Heart right ventricle (tissue), 16 donors: ENCODE measurements at regions of chr6 and their contacts with region 1.

Region 1: DNA sequence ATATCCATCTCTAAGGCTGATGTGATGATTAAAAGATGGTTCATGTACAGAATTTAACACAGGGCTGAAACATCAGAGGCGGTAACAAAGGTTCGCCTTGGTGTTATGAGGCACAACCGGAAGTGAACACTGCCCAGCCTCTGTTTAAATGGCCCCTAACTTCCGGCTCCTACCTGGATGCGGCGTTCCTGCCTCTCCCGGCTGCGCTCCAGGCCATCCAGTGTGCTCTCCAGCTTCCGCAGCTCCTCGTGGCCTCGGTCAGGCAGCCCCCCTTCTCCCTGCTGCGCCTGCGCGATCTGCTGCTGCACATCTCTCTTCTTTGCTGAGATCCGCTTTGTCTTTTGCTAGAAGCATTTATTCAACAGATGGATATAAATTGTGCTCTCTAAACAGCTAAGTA is 195.3 kb downstream of the SYNE1 start:
- DNase-seq: no peak
- ATAC-seq: no peak
- H3K4me3 ChIP-seq: no peak overlapping the region
- H3K27ac ChIP-seq: no peak overlapping the region
- H3K4me1 ChIP-seq: no peaks in the 10 kb centered on the region
- H3K27me3 ChIP-seq: no peaks in the 10 kb centered on the region
- CTCF ChIP-seq: no peak

Region 2: DNA sequence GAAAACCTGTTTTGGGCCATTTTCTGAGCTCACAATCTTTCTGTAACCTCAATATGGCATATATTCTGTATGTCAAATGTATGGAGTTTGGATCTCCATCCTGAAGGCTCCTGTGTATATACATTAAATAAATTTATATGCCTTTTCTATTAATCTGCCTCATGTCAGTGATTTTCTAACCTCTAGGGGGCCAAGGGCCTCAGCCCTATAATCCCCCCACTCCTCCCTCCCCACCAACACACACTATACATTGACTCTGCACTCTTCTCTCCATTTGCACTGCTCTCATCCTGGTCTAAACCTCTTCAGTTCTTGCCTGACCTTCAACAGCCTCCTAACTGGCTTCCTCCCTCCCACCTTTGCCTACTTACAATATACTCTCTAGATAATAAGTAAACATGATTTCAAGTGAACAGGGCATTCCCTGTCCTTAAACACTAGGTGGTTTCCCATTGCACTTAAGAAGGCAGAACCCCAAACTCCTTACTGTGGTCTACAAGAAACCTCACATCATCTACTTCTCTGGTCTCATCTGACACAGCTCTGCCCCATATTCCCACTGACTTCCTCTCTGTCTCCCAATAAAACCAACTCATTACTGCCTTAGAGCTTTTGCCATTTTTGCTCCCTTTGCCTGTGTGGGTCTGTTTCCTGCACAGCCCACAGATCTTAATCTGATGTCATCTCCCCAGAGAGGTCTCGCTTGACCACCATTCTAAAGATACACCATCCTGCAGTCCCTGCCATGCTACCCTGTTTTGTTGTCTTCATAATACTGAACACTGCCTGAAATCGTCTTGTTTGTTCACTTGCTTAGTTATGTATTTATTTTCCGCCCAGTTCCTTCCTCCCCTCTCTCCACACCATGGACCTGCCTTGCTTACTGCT is 18.4 kb before region 1 on chr6:
- intact Hi-C with region 1: loop called in 1 of 10 experiments (anchors 1 kb)
- DNase-seq: no peak
- ATAC-seq: no peak
- H3K4me3 ChIP-seq: no peak overlapping the region
- H3K27ac ChIP-seq: no peak overlapping the region
- H3K4me1 ChIP-seq: no peaks in the 10 kb centered on the region
- H3K27me3 ChIP-seq: no peaks in the 10 kb centered on the region
- CTCF ChIP-seq: no peak